WTC11 (cell line): ENCODE measurements at regions of chr14 and their contacts with region 1.

Region 1: GRCh38 chr14:33848706-33849454 is 102.0 kb downstream of the EGLN3 start:
- DNase-seq: peak; percentile 90
- ATAC-seq: peak; percentile 99
- H3K4me3 Mint-ChIP-seq: no peak overlapping the region
- H3K27ac Mint-ChIP-seq: no peak overlapping the region
- H3K4me1 Mint-ChIP-seq: peaks cover 38% of the 10 kb centered on the region
- H3K27me3 Mint-ChIP-seq: no peaks in the 10 kb centered on the region
- CTCF ChIP-seq: peak; percentile 71

Region 2: DNA sequence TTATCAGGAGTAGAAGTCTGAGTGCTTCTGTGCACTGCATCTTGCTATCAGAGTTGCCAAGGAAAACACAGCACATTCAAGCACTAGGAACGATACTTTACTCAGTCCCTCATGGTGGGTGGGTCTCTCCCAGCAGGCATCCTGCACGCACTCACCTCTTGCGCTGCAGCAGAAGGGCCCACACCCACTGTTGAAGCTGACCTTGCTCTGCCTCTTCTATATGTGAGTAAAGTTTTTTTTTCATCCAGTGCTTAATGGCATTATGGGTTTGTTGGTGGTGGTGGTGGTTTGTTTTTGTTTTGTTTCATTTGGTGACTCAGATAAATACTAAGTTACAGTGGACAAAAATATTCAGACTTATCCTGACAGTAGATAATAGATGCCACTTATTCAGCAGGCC is 246.5 kb before region 1 on chr14:
- CTCF ChIA-PET with region 1: no interaction called
- POLR2A ChIA-PET with region 1: no interaction called
- DNase-seq: no peak
- ATAC-seq: no peak
- H3K4me3 Mint-ChIP-seq: no peak overlapping the region
- H3K27ac Mint-ChIP-seq: no peak overlapping the region
- H3K4me1 Mint-ChIP-seq: peaks cover 22% of the 10 kb centered on the region
- H3K27me3 Mint-ChIP-seq: no peaks in the 10 kb centered on the region
- CTCF ChIP-seq: no peak

Region 3: GRCh38 chr14:33859306-33859705 is 10.4 kb after region 1 on chr14:
- CTCF ChIA-PET with region 1: interaction called, 10 read pairs
- POLR2A ChIA-PET with region 1: no interaction called
- DNase-seq: no peak
- ATAC-seq: no peak
- H3K4me3 Mint-ChIP-seq: no peak overlapping the region
- H3K27ac Mint-ChIP-seq: no peak overlapping the region
- H3K4me1 Mint-ChIP-seq: no peaks in the 10 kb centered on the region
- H3K27me3 Mint-ChIP-seq: no peaks in the 10 kb centered on the region
- CTCF ChIP-seq: no peak

Region 4: DNA sequence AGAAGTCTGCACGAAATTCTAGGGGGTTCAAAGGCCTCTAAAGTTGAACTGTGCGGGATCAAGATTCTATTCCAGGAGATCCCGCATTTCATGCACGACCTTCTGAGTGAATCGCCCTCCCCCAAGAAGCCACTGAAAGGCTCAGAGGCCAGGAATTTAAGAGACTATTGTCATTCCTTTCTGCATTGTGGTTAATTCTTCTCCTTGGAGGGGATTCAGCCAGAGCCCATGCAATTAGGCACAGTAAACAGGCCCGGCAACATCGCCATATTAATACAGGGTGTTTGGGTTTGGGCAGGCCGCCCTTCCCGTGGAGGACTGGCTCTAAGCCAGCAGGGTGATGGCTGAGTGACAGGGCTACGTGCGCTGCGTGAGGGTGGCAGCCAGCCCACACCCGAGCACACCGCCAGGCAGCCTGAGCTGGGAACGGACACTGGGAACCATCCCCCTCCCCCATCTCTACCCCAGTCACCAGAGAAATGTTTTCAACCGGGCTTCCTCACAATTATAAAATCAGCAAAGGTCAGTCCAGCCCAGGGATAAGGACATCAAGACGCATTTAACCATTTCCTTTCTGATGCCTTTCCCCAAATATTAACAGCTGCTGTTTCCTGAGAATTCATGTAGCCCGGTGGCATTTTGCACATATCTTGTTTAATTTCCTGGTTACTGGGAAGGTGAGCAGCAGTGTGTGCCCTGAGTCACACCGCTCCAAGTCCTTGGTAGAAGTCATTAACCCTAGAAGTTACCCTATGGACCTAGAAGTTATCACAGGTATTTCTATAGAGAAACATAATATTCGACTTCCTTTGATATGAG is 89.5 kb after region 1 on chr14:
- CTCF ChIA-PET with region 1: interaction called, 11 read pairs
- POLR2A ChIA-PET with region 1: no interaction called
- DNase-seq: peak; percentile 47
- ATAC-seq: peak; percentile 76
- H3K4me3 Mint-ChIP-seq: peak overlapping the region; percentile 52
- H3K27ac Mint-ChIP-seq: peak overlapping the region; percentile 94
- H3K4me1 Mint-ChIP-seq: peaks cover 82% of the 10 kb centered on the region
- H3K27me3 Mint-ChIP-seq: no peaks in the 10 kb centered on the region
- CTCF ChIP-seq: no peak

Region 5: DNA sequence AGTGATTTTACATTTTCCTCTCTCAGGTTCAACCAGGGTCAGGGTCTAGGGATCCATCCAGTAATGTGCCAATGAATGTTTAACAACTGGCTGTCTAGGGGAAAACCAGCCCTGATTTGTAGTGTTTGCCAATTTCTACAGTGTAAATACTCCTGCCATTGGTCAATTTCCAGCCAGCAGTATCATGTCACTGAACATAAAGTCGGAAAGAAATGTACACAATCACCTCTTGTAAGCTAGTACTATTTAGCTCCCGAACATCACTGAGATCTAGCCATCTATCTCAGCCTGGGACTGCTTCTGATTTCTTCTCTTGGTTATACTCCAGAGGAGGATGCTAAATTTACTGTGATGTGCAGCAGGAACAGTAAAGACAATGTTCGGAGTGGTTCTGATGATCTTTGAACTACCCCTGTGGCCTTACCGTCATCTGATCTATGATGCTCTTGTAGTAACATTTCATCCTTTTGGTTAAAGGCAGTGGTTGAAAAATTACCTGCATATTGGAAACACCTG is 138.7 kb after region 1 on chr14:
- CTCF ChIA-PET with region 1: no interaction called
- POLR2A ChIA-PET with region 1: no interaction called
- DNase-seq: no peak
- ATAC-seq: no peak
- H3K4me3 Mint-ChIP-seq: no peak overlapping the region
- H3K27ac Mint-ChIP-seq: no peak overlapping the region
- H3K4me1 Mint-ChIP-seq: no peaks in the 10 kb centered on the region
- H3K27me3 Mint-ChIP-seq: no peaks in the 10 kb centered on the region
- CTCF ChIP-seq: no peak

Region 6: DNA sequence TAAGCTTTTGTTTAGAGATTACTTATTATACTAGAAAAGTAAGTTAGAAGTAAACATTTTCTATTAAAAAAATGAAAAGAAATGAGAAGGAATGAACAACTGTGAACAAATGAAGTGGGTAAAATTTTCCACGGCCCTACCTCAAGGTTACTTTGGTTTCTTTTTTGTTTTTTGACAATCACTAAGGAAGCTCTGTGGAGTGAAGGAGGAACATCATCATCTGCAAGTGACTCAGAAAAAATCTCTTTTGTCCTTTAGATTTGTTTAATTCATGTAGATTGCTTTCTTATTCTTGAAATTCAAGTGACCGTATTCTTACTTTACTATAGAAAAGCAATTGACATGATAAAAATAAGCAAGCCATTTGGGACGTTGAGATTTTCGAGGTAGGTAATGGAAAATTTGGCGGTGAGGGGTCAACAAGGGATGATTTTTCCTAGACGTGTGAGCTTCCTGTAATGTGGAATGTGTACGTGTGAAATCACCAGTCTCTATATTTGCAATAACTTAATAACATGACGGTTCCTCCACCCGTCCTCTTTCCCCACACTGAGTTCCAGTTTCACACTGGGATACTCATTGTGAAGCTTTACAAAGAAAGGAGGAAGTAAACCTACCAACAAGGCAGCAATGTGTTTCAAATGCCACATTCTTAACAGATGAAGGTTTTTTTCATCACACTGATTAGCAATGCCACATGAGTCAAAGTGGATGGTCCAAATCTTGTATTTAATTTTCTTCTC is 164.3 kb after region 1 on chr14:
- CTCF ChIA-PET with region 1: interaction called, 13 read pairs
- POLR2A ChIA-PET with region 1: no interaction called
- DNase-seq: no peak
- ATAC-seq: peak; percentile 32; the same call in 1 of the 2 replicates
- H3K4me3 Mint-ChIP-seq: no peak overlapping the region
- H3K27ac Mint-ChIP-seq: no peak overlapping the region
- H3K4me1 Mint-ChIP-seq: peaks cover 37% of the 10 kb centered on the region
- H3K27me3 Mint-ChIP-seq: no peaks in the 10 kb centered on the region
- CTCF ChIP-seq: no peak

Region 7: DNA sequence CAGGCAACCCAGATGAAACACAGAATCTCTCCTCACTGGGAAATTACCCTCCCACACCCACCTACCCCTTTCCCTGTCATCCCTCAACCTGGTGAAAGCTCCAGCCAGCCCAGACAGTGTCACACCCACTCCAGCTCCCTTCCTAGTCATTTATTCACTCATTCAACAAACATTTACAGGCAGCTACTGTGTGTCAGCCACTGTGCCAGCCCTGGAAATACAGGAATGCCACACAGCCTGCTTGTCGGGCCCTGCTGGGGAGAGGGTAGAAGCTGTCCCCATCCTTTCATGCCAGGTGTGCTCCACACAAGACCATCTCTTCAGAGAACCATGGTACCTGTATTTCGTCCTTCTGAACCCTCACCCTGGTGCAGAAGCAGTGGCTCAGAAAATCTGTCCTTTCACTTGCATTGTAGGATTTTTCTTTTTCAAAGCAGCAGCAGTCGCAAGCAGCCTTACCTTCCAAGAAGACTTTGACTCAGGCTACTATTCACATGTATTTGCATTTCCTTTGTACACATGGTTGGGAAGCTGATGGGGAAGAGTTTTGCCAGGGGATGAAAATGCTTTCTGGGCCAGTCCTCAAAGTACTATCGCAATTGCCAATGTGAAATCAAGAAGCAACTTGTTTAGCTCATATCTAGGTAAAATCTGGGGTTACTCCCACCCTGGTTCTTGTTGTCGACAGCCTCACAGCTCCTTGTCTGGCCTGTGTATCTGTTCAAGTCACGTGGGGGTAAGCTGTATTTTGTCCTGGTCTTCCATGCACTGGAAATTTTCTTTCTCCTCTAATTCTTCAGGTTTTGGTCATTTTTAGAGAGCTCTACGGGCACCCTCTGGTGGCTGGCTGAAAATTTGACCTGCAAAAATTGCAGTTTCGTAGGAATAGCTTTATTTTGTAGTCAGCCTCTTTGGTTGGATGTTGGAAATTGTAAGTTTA is 249.4 kb after region 1 on chr14:
- CTCF ChIA-PET with region 1: interaction called, 91 read pairs
- POLR2A ChIA-PET with region 1: interaction called, 3 read pairs
- DNase-seq: peak; percentile 25
- ATAC-seq: peak; percentile 18
- H3K4me3 Mint-ChIP-seq: no peak overlapping the region
- H3K27ac Mint-ChIP-seq: peak overlapping the region; percentile 18; the same call in 1 of the 2 replicates
- H3K4me1 Mint-ChIP-seq: peaks cover 9% of the 10 kb centered on the region
- H3K27me3 Mint-ChIP-seq: no peaks in the 10 kb centered on the region
- CTCF ChIP-seq: peak; percentile 38; the same call in 1 of the 2 replicates

Region 8: GRCh38 chr14:34322940-34323418 is 474.1 kb after region 1 on chr14:
- CTCF ChIA-PET with region 1: interaction called, 10 read pairs
- POLR2A ChIA-PET with region 1: no interaction called
- DNase-seq: peak; percentile 70
- ATAC-seq: peak; percentile 77
- H3K4me3 Mint-ChIP-seq: no peak overlapping the region
- H3K27ac Mint-ChIP-seq: no peak overlapping the region
- H3K4me1 Mint-ChIP-seq: peaks cover 3% of the 10 kb centered on the region; the same call in 1 of the 2 replicates
- H3K27me3 Mint-ChIP-seq: no peaks in the 10 kb centered on the region
- CTCF ChIP-seq: peak; percentile 93